ENCODE measurements at regions of chr10 and their contacts with region 1.

Region 1: GRCh38 chr10:12348870-12349628 is at the start of gene CAMK1D:
- DNase-seq: peak; percentile 77
- H3K4me3 ChIP-seq: peak within 1 kb of the TSS; percentile 61 to 65
- H3K27ac ChIP-seq: peak within 1 kb of the TSS; percentile 74 to 84
- H3K4me1 ChIP-seq: no peaks in the 10 kb centered on the region
- H3K27me3 ChIP-seq: no peaks in the 10 kb centered on the region
- CTCF ChIP-seq: peak; percentile 30 to 49 (median 36)
- POLR2A ChIP-seq: peak; percentile 49
- total RNA-seq, gene CAMK1D: 4.8 to 14.5 TPM

Region 2: GRCh38 chr10:12271210-12271540 is 77.9 kb before region 1 on chr10:
- intact Hi-C with region 1: loop called (anchors 5 kb)
- DNase-seq: no peak
- H3K4me3 ChIP-seq: no peak overlapping the region
- H3K27ac ChIP-seq: peak overlapping the region in 1 of 2 donors; percentile 9
- H3K4me1 ChIP-seq: no peaks in the 10 kb centered on the region
- H3K27me3 ChIP-seq: no peaks in the 10 kb centered on the region
- CTCF ChIP-seq: no peak
- POLR2A ChIP-seq: no peak

Region 3: DNA sequence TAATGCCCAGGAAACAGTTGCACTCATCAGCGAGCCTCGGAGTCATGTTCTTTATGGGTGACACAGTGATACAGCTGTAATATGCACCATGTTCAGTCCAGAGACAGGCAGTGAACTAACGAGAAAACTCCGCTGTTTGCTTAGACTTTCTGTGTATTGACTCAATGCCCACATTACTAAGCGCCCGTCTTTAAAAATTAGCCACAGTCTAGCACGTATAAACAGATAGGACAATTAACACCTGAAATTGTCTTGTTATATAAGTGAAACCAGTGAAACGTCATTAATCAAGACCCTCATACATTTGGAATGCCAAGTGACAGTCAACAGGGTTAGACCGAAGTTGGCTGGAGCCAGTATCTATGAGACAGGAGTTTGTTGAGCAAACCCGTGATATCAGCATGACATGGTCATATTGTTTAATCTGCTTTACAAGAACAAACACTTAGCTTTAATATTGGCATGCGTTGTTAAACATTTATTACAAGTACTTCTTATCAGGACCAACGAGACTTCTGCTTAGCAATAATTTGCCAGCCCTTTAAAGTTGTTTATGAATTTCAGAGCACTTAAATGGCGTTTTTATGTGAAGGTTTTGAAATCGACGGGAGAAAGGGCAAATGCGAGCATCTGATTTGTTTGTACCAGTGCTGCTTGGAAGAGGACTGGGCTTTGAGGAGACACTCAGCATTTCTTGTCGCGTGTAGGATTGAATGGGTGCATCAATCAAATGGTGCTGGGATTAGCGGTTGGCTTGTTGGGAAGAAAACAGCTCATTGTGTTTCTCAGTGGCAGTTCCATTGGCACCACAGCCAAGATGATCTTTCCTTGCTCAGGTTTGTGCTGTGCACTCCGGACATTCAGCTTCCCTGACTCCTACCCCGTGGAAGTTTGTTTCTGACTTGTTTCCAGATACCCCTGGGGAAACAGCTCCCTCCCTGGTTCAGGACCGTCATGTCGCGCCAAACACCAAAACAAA is 56.6 kb after region 1 on chr10:
- intact Hi-C with region 1: loop called (anchors 10 kb)
- DNase-seq: peak; percentile 60
- H3K4me3 ChIP-seq: no peak overlapping the region
- H3K27ac ChIP-seq: peak overlapping the region; percentile 43 to 69
- H3K4me1 ChIP-seq: no peaks in the 10 kb centered on the region
- H3K27me3 ChIP-seq: no peaks in the 10 kb centered on the region
- CTCF ChIP-seq: no peak
- POLR2A ChIP-seq: no peak

Region 4: DNA sequence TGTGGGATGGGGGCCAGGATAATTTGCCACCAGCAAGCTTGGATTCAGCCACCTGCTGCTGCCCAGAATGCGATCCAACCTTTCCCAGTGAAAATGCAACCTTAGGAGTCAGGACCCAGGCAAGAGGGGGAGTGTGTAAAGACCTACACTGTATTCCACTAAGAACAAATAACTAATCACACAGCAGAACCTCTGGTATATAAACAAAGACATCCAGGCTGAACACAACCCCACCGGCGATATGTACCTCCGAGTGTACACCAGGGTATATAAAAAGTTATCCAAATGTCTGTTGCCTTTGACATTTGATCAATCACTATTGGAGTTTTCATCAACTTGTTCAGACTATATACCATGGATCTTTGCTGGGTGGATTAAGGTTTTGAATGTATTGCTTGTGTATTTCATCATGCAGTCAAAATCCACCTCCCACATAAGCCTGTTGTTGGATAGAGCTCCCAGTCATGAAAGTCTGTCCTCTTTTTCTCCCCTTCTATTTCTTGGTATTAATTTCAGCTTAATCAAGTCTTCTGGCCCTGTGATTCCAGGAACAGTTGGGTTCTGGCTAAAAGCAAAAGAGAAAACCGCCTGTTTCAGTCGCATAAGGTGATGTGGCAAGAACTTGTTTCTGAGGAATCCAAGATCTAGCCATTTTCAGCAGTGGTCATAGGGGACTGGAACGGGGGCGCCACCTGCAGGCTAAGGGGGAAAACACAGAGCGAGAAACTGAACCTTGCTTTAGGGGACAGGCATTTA is 361.7 kb after region 1 on chr10:
- intact Hi-C with region 1: loop called (anchors 5 kb)
- DNase-seq: peak; percentile 66
- H3K4me3 ChIP-seq: no peak overlapping the region
- H3K27ac ChIP-seq: peak overlapping the region in 1 of 2 donors; percentile 7
- H3K4me1 ChIP-seq: no peaks in the 10 kb centered on the region
- H3K27me3 ChIP-seq: no peaks in the 10 kb centered on the region
- CTCF ChIP-seq: peak; percentile 68 to 85 (median 82)
- POLR2A ChIP-seq: no peak